H1 (cell line): ENCODE measurements at regions of chr20 and their contacts with region 1.

Region 1: DNA sequence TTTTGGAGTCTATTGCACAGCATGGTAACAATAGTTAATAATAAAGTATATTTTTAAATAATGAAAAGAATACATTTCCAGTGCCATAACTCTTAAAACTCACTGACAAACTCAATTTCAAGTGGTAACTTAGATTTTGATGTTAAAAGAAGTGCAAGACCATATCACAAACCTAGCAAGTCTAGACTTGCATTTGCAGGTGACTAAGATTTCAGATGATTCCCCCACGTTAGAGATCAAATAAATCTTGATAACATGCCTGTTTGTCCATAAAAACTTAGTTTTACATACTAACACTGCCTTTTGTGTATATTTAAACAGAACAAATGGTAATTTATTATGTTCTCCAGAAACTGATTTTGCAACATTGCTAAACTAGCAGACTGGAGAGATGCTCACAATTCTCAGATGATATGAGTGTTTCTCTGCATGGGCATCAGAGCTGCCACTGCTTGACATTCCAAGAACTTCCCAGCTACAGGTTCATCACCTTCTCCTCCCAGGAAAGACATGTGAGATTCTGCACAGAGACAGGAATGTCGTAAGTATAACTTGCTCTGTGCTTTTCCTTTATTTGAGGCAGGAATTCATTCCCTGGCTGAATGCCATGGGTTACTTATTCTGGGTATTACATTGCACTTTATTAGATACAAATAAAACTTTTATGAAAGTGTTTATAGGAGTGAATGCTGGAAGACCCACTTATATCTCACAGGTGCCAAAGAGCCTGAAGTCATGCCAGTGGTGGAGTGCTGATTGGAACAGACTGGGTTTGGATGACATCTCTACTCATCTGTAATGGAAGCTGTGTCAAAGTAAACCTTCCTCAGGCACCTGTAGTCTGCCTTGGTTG is 160.2 kb upstream of the FOXA2 start:
- DNase-seq: no peak
- H3K4me3 ChIP-seq: no peak overlapping the region
- H3K27ac ChIP-seq: no peak overlapping the region
- H3K4me1 ChIP-seq: no peaks in the 10 kb centered on the region
- H3K27me3 ChIP-seq: no peaks in the 10 kb centered on the region
- CTCF ChIP-seq: no peak
- EP300 ChIP-seq: no peak
- POLR2A ChIP-seq: no peak
- RAD21 ChIP-seq: no peak

Region 2: DNA sequence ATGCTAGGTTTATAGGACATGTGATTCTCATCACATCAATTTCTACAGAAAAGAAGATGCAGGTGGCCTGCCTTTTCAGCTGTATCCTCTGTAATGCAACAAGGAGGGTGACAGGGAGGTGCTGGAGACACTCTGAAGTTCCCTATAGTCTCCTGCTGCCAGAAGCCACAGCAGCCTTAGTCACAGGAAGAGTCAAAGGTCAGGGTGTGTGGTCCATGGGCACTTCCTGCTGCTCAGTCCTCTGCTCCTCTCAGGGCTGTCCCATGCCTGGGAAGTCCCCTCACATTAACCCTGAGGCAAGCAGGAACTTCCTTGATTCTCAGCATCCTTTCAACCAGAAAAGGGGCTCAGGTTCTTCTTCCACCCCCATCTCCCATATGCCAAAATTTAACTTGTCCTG is 15.4 kb before region 1 on chr20:
- CTCF ChIA-PET with region 1: interaction called, 10 read pairs
- POLR2A ChIA-PET with region 1: no interaction called
- DNase-seq: no peak
- H3K4me3 ChIP-seq: no peak overlapping the region
- H3K27ac ChIP-seq: no peak overlapping the region
- H3K4me1 ChIP-seq: no peaks in the 10 kb centered on the region
- H3K27me3 ChIP-seq: no peaks in the 10 kb centered on the region
- CTCF ChIP-seq: no peak
- EP300 ChIP-seq: no peak
- POLR2A ChIP-seq: no peak
- RAD21 ChIP-seq: no peak

Region 3: DNA sequence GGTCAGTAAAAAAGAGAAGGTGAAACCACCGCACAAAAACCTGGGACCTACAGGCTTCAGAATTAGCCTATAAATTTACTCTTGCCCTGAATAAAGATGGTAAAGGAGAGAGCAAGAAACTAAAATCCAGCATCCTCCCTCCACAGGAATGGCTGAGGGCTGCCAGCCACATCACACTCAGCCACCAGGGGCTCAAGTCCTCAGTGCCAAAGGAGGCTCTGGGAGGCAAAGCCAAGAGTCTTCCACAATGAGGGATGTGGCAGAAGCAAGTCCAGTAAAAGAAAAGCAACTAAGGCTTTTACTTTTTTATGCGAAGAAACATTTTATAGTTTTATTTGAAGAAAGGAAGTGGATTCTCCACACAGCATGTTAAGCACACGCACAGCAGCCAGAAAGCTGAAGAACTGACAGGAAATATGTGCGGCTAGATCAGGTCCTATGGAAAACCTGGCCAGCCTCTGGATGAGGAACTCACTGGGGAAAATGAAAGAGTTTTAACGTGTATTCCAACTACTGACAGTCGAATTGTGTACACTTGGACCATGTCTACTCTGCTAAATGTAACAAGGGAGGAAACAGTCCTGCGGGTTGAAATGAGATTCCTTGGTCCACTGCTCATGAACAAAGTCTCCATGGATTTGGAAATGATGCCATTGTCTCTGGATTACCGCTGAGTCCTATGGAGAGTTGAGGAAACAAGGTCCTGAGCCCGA is 71.2 kb after region 1 on chr20:
- CTCF ChIA-PET with region 1: no interaction called
- POLR2A ChIA-PET with region 1: no interaction called
- DNase-seq: no peak
- H3K4me3 ChIP-seq: no peak overlapping the region
- H3K27ac ChIP-seq: no peak overlapping the region
- H3K4me1 ChIP-seq: no peaks in the 10 kb centered on the region
- H3K27me3 ChIP-seq: no peaks in the 10 kb centered on the region
- CTCF ChIP-seq: peak; percentile 33 to 54 (median 44)
- EP300 ChIP-seq: no peak
- POLR2A ChIP-seq: no peak
- RAD21 ChIP-seq: peak in 1 of 2 experiments; percentile 11; a peak in 2 of 4 replicates